ENCODE measurements at regions of chr4 and their contacts with region 1.

Region 1: GRCh38 chr4:130808492-130808891 is 1712.5 kb downstream of the C4orf33 start:
- DNase-seq: peak in 1 of 2 experiments; percentile 24
- H3K4me3 ChIP-seq: no peak overlapping the region
- H3K4me3 Mint-ChIP-seq: no peak overlapping the region
- H3K27ac Mint-ChIP-seq: no peak overlapping the region
- H3K4me1 ChIP-seq: no peaks in the 10 kb centered on the region
- H3K4me1 Mint-ChIP-seq: no peaks in the 10 kb centered on the region
- H3K27me3 ChIP-seq: no peaks in the 10 kb centered on the region
- H3K27me3 Mint-ChIP-seq: no peaks in the 10 kb centered on the region
- CTCF ChIP-seq: peak; percentile 32 to 65

Region 2: GRCh38 chr4:129362674-129363274 is 1445.7 kb before region 1 on chr4:
- CTCF ChIA-PET with region 1: no interaction called
- POLR2A ChIA-PET with region 1: no interaction called
- intact Hi-C with region 1: loop called (anchors 2 kb)
- DNase-seq: peak; percentile 46 to 61
- H3K4me3 ChIP-seq: no peak overlapping the region
- H3K4me3 Mint-ChIP-seq: no peak overlapping the region
- H3K27ac Mint-ChIP-seq: no peak overlapping the region
- H3K4me1 ChIP-seq: no peaks in the 10 kb centered on the region
- H3K4me1 Mint-ChIP-seq: peaks cover 3% of the 10 kb centered on the region
- H3K27me3 ChIP-seq: peaks cover 1% of the 10 kb centered on the region; the same call in 1 of the 2 replicates
- H3K27me3 Mint-ChIP-seq: no peaks in the 10 kb centered on the region
- CTCF ChIP-seq: peak; percentile 70 to 75

Region 3: DNA sequence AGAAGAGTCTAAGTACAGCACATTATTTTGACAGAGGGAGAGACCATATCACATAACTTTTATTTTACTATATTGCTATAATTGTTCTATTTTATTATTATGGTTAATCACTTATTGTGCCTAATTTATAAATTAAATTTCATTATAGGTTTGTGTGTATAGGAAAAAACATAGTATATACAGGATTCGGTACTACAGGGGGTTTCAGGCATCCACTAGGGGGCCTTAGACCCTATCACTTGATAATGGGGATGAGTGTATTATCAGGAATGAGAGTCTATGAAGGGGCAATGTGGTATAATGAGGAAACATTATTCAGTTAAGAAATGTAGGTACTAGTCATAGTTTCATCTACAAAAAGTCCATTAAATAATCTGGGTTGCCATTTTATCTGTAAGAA is 879.4 kb before region 1 on chr4:
- CTCF ChIA-PET with region 1: no interaction called
- POLR2A ChIA-PET with region 1: no interaction called
- intact Hi-C with region 1: loop called (anchors 10 kb)
- DNase-seq: peak in 1 of 2 experiments; percentile 17
- H3K4me3 ChIP-seq: no peak overlapping the region
- H3K4me3 Mint-ChIP-seq: no peak overlapping the region
- H3K27ac Mint-ChIP-seq: no peak overlapping the region
- H3K4me1 ChIP-seq: no peaks in the 10 kb centered on the region
- H3K4me1 Mint-ChIP-seq: no peaks in the 10 kb centered on the region
- H3K27me3 ChIP-seq: no peaks in the 10 kb centered on the region
- H3K27me3 Mint-ChIP-seq: peaks cover under 1% of the 10 kb centered on the region
- CTCF ChIP-seq: peak; percentile 18 to 42

Region 4: DNA sequence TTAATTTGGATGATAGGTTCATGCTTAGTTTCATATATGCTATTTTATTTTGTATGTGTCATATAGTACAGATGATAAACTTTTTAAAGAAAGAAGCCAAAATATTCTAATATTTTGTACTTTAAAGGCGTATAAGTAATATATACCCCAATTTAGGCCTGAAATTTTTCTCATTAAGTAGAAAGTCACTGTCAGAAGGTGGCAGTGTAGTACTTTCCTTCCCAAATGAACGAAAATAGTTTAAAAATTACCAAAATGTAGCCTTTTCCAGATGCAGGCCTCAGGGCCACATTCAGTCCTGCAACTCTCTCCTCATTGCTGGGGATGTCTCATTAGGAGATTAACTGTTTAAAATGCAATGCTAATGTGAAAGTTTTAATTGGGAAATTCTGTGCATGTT is 448.9 kb before region 1 on chr4:
- CTCF ChIA-PET with region 1: no interaction called
- POLR2A ChIA-PET with region 1: no interaction called
- intact Hi-C with region 1: loop called (anchors 1 kb)
- DNase-seq: no peak
- H3K4me3 ChIP-seq: no peak overlapping the region
- H3K4me3 Mint-ChIP-seq: no peak overlapping the region
- H3K27ac Mint-ChIP-seq: no peak overlapping the region
- H3K4me1 ChIP-seq: no peaks in the 10 kb centered on the region
- H3K4me1 Mint-ChIP-seq: no peaks in the 10 kb centered on the region
- H3K27me3 ChIP-seq: no peaks in the 10 kb centered on the region
- H3K27me3 Mint-ChIP-seq: peaks cover 3% of the 10 kb centered on the region
- CTCF ChIP-seq: peak; percentile 11 to 30

Region 5: GRCh38 chr4:130563185-130563888 is 245.2 kb before region 1 on chr4:
- CTCF ChIA-PET with region 1: interaction called, 8 read pairs
- POLR2A ChIA-PET with region 1: no interaction called
- intact Hi-C with region 1: loop called (anchors 1 kb)
- DNase-seq: peak; percentile 51 to 54
- H3K4me3 ChIP-seq: no peak overlapping the region
- H3K4me3 Mint-ChIP-seq: peak overlapping the region; percentile 57
- H3K27ac Mint-ChIP-seq: no peak overlapping the region
- H3K4me1 ChIP-seq: peaks cover 13% of the 10 kb centered on the region
- H3K4me1 Mint-ChIP-seq: peaks cover 19% of the 10 kb centered on the region
- H3K27me3 ChIP-seq: no peaks in the 10 kb centered on the region
- H3K27me3 Mint-ChIP-seq: peaks cover 2% of the 10 kb centered on the region
- CTCF ChIP-seq: peak; percentile 49 to 64

Region 6: GRCh38 chr4:130747842-130748241 is 60.6 kb before region 1 on chr4:
- CTCF ChIA-PET with region 1: no interaction called
- POLR2A ChIA-PET with region 1: no interaction called
- intact Hi-C with region 1: loop called (anchors 1 kb)
- DNase-seq: no peak
- H3K4me3 ChIP-seq: no peak overlapping the region
- H3K4me3 Mint-ChIP-seq: no peak overlapping the region
- H3K27ac Mint-ChIP-seq: no peak overlapping the region
- H3K4me1 ChIP-seq: no peaks in the 10 kb centered on the region
- H3K4me1 Mint-ChIP-seq: no peaks in the 10 kb centered on the region
- H3K27me3 ChIP-seq: no peaks in the 10 kb centered on the region
- H3K27me3 Mint-ChIP-seq: no peaks in the 10 kb centered on the region
- CTCF ChIP-seq: peak in 1 of 2 experiments; percentile 9

Region 7: DNA sequence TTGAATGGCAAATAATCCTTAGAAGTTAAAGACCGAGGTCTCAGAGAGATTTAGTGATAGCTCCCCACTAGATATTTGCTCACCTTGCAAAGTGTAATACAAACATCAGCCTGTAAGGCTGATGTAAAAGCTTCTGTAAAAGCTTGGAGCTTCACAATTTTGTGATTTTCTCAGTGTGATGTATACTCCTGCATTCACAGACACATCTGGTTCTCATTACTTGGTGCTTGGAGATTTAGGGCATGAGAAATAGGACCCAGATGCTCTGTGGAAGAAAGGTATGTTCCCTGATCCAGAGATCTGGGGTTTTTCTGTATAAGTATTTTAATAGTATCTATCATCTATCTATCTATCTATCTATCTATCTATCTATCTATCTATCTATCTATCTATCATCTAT is 48.2 kb before region 1 on chr4:
- CTCF ChIA-PET with region 1: no interaction called
- POLR2A ChIA-PET with region 1: no interaction called
- intact Hi-C with region 1: no loop called
- DNase-seq: no peak
- H3K4me3 ChIP-seq: no peak overlapping the region
- H3K4me3 Mint-ChIP-seq: no peak overlapping the region
- H3K27ac Mint-ChIP-seq: no peak overlapping the region
- H3K4me1 ChIP-seq: no peaks in the 10 kb centered on the region
- H3K4me1 Mint-ChIP-seq: no peaks in the 10 kb centered on the region
- H3K27me3 ChIP-seq: no peaks in the 10 kb centered on the region
- H3K27me3 Mint-ChIP-seq: no peaks in the 10 kb centered on the region
- CTCF ChIP-seq: no peak

Measured in Caco-2 (cell line).